Esophagus muscularis mucosa (tissue), 4 donors: ENCODE measurements at regions of chr3 and their contacts with region 1.

Region 1: DNA sequence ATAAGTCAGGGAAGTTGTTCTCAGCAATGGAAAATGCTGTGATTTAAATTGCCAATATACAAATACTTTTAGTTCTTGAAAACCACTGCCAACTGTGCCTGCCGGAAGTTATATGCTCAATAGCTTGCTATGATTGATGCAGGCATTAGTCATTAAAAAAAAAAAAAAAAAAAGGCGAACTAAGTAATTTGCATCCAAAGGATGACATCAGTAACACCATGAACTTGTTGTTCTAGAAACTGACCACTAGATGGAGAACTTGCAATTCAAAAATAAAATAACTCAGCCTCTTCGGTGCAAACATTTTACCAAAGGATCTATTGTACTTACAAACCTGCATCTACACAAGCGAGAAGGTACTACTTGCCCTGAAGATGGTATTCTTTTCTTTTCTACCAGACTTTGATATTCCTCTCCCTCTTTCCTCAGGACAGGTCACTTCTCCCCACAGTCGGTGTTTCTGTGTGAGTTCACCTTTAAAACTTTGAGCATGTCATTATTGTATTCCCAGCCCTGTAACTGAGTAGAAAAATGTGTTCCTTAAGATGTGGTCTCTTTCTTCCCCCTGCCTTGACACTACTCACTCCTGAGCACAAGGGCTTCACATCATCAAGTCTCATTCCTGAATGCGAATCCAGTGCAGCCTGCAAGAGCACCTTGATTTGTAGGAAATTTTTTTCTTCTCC is 115.0 kb upstream of the VEPH1 start:
- DNase-seq: no peak
- H3K4me3 ChIP-seq: no peak overlapping the region
- H3K27ac ChIP-seq: no peak overlapping the region
- H3K4me1 ChIP-seq: no peaks in the 10 kb centered on the region
- H3K27me3 ChIP-seq: no peaks in the 10 kb centered on the region
- CTCF ChIP-seq: peak; percentile 52 to 72 (median 68)
- EP300 ChIP-seq: no peak
- POLR2A ChIP-seq: no peak

Region 2: DNA sequence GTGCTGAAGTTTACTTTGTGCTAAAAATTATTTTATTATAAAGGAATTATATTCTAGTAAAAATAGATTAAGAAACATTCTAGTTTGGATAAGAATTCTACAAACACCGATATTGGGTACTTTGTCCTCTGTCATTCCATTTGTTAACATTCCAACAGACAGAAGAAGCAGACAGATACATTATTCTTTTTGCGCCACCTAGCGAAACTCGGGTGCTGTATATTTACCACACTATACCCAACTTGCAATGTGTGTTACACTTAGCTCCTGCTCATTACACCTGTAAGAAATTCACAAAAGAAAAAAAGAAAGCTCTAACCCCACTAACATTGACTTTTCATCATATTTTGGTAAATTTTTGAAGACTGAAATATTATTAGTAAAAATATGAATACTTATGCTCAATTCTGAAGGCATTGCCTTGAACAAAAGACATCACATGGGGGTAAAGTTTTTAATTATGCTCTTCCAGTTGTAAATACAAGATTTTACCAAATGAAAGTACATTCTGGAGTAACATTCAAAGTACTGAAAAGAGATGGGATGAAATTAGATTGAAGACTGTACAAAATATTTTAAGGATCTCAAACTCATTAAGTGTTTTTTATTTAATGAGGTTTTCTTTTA is 816.3 kb after region 1 on chr3:
- intact Hi-C with region 1: loop called (anchors 5 kb)
- DNase-seq: no peak
- H3K4me3 ChIP-seq: no peak overlapping the region
- H3K27ac ChIP-seq: no peak overlapping the region
- H3K4me1 ChIP-seq: no peaks in the 10 kb centered on the region
- H3K27me3 ChIP-seq: no peaks in the 10 kb centered on the region
- CTCF ChIP-seq: peak; percentile 62 to 69 (median 63)
- EP300 ChIP-seq: no peak
- POLR2A ChIP-seq: no peak